ENCODE measurements at regions of chr13 and their contacts with region 1.

Region 1: GRCh38 chr13:59771272-59771671 is 392.5 kb downstream of the DIAPH3 start:
- DNase-seq: peak in 1 of 2 experiments; percentile 35
- H3K4me3 ChIP-seq: no peak overlapping the region
- H3K4me3 Mint-ChIP-seq: no peak overlapping the region
- H3K27ac Mint-ChIP-seq: no peak overlapping the region
- H3K4me1 ChIP-seq: peaks cover 92% of the 10 kb centered on the region
- H3K4me1 Mint-ChIP-seq: peaks cover 43% of the 10 kb centered on the region
- H3K27me3 ChIP-seq: no peaks in the 10 kb centered on the region
- H3K27me3 Mint-ChIP-seq: no peaks in the 10 kb centered on the region
- CTCF ChIP-seq: peak; percentile 52 to 74

Region 2: GRCh38 chr13:59391696-59392095 is 379.6 kb before region 1 on chr13:
- CTCF ChIA-PET with region 1: no interaction called
- POLR2A ChIA-PET with region 1: no interaction called
- intact Hi-C with region 1: loop called (anchors 1 kb)
- DNase-seq: peak; percentile 57 to 76
- H3K4me3 ChIP-seq: no peak overlapping the region
- H3K4me3 Mint-ChIP-seq: no peak overlapping the region
- H3K27ac Mint-ChIP-seq: no peak overlapping the region
- H3K4me1 ChIP-seq: no peaks in the 10 kb centered on the region
- H3K4me1 Mint-ChIP-seq: peaks cover 6% of the 10 kb centered on the region
- H3K27me3 ChIP-seq: no peaks in the 10 kb centered on the region
- H3K27me3 Mint-ChIP-seq: no peaks in the 10 kb centered on the region
- CTCF ChIP-seq: peak; percentile 86 to 89

Region 3: GRCh38 chr13:59677966-59678814 is 93.1 kb before region 1 on chr13:
- CTCF ChIA-PET with region 1: interaction called, 12 read pairs
- POLR2A ChIA-PET with region 1: no interaction called
- intact Hi-C with region 1: loop called (anchors 1 kb)
- DNase-seq: peak in 1 of 2 experiments; percentile 51
- H3K4me3 ChIP-seq: no peak overlapping the region
- H3K4me3 Mint-ChIP-seq: no peak overlapping the region
- H3K27ac Mint-ChIP-seq: no peak overlapping the region
- H3K4me1 ChIP-seq: peaks cover 42% of the 10 kb centered on the region
- H3K4me1 Mint-ChIP-seq: peaks cover 6% of the 10 kb centered on the region
- H3K27me3 ChIP-seq: no peaks in the 10 kb centered on the region
- H3K27me3 Mint-ChIP-seq: no peaks in the 10 kb centered on the region
- CTCF ChIP-seq: peak; percentile 79 to 85

Region 4: DNA sequence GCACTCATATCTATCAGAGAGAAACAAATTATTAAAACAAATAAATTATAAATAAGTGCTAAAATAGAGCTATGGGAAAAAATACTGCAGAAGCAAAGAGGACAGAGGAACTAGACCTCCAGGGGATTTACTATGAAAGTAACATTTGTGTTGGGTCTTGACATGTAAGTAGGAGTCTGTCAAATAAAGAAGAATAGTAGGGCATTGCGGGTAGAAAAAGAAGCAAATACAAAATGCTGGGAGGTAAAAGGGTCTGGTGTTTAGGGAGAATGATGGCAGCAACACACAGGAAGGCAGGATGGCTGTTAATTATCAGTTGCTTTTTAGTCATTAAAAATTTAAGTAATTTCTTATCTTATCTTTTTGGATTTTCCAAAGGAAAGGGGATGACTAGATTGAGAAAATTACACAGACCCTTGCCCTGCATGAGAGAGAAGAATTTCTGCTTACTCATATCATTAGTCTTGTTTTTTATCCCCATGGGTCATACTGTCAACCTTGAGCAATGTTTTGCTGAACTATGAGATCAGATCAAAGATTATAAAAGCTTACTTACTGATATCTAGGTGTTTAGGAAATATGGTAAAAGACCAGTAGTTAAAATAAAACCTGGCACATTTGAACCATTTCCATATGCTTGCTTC is 80.3 kb before region 1 on chr13:
- CTCF ChIA-PET with region 1: no interaction called
- POLR2A ChIA-PET with region 1: no interaction called
- intact Hi-C with region 1: loop called (anchors 1 kb)
- DNase-seq: peak in 1 of 2 experiments; percentile 70
- H3K4me3 ChIP-seq: no peak overlapping the region
- H3K4me3 Mint-ChIP-seq: peak overlapping the region; percentile 29
- H3K27ac Mint-ChIP-seq: peak overlapping the region; percentile 54
- H3K4me1 ChIP-seq: peaks cover 94% of the 10 kb centered on the region
- H3K4me1 Mint-ChIP-seq: peaks cover 45% of the 10 kb centered on the region
- H3K27me3 ChIP-seq: no peaks in the 10 kb centered on the region
- H3K27me3 Mint-ChIP-seq: no peaks in the 10 kb centered on the region
- CTCF ChIP-seq: no peak

Region 5: DNA sequence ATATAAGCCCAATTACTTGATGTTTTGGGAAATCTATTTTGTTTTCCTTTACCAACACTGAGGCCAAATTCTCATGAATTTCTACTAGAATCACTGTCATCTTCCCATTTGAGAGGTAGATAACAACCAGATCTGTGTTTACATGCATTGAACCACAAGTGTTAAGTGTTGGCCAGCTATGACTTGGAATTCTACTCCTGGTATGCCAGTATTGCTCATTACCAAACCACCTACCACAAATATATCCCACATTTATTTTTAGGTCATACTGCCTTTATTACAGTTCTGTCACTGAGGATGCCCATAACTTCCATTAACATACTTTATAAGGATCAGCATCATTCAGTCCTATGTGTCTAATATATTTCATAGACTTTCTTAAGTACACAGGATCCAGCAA is 63.5 kb after region 1 on chr13:
- CTCF ChIA-PET with region 1: no interaction called
- POLR2A ChIA-PET with region 1: no interaction called
- intact Hi-C with region 1: loop called (anchors 1 kb)
- DNase-seq: no peak
- H3K4me3 ChIP-seq: no peak overlapping the region
- H3K4me3 Mint-ChIP-seq: peak overlapping the region; percentile 46
- H3K27ac Mint-ChIP-seq: peak overlapping the region; percentile 97
- H3K4me1 ChIP-seq: peaks cover 59% of the 10 kb centered on the region
- H3K4me1 Mint-ChIP-seq: peaks cover 28% of the 10 kb centered on the region
- H3K27me3 ChIP-seq: no peaks in the 10 kb centered on the region
- H3K27me3 Mint-ChIP-seq: no peaks in the 10 kb centered on the region
- CTCF ChIP-seq: no peak

Region 6: DNA sequence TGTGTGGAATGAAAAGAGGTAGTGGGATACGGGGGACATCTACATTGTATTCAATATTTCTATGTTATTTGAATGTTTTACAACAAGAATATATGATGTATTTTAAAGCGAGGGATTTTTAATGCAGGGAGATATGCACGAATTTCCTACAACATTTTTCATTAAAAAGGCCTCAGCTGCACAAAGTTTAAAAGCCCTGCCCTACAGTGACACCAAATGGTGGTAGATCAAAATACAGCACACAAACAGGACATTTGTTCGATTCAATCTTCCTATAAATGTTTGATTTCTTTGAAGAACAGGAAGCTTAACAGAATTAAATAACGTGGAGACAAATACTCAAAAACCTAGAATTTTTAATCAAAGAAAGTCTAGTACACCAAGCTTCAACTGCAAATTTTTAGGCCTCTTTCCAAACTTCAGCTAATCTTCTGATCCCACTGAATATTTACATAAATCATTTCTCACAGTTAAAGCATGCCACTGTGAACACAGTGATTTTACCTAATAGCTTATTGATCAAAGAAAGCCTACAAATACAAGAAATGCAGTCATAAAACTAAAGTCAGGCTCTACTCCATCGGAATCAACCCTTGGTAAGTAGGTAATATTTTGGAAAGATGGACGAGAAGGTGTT is 135.3 kb after region 1 on chr13:
- CTCF ChIA-PET with region 1: interaction called, 3 read pairs
- POLR2A ChIA-PET with region 1: no interaction called
- intact Hi-C with region 1: loop called (anchors 1 kb)
- DNase-seq: peak in 1 of 2 experiments; percentile 30
- H3K4me3 ChIP-seq: no peak overlapping the region
- H3K4me3 Mint-ChIP-seq: no peak overlapping the region
- H3K27ac Mint-ChIP-seq: no peak overlapping the region
- H3K4me1 ChIP-seq: peaks cover 11% of the 10 kb centered on the region; the same call in 1 of the 2 replicates
- H3K4me1 Mint-ChIP-seq: peaks cover 7% of the 10 kb centered on the region
- H3K27me3 ChIP-seq: no peaks in the 10 kb centered on the region
- H3K27me3 Mint-ChIP-seq: no peaks in the 10 kb centered on the region
- CTCF ChIP-seq: peak; percentile 66 to 67

Region 7: GRCh38 chr13:60329221-60329983 is 558.1 kb after region 1 on chr13:
- CTCF ChIA-PET with region 1: no interaction called
- POLR2A ChIA-PET with region 1: no interaction called
- intact Hi-C with region 1: loop called (anchors 1 kb)
- DNase-seq: peak; percentile 83
- H3K4me3 ChIP-seq: no peak overlapping the region
- H3K4me3 Mint-ChIP-seq: no peak overlapping the region
- H3K27ac Mint-ChIP-seq: peak overlapping the region; percentile 10
- H3K4me1 ChIP-seq: peaks cover 35% of the 10 kb centered on the region
- H3K4me1 Mint-ChIP-seq: peaks cover 18% of the 10 kb centered on the region
- H3K27me3 ChIP-seq: no peaks in the 10 kb centered on the region
- H3K27me3 Mint-ChIP-seq: no peaks in the 10 kb centered on the region
- CTCF ChIP-seq: peak; percentile 70 to 81

Measured in Caco-2 (cell line).